IMR-90 (cell line): ENCODE measurements at regions of chr15 and their contacts with region 1.

Region 1: GRCh38 chr15:23648920-23649515 is 1.4 kb upstream of the MAGEL2 start:
- DNase-seq: no peak
- ATAC-seq: peak; percentile 42; the same call in 1 of the 2 replicates
- H3K4me3 ChIP-seq: no peak overlapping the region
- H3K27ac ChIP-seq: no peak overlapping the region
- H3K4me1 ChIP-seq: no peaks in the 10 kb centered on the region
- H3K27me3 ChIP-seq: no peaks in the 10 kb centered on the region
- CTCF ChIP-seq: peak; percentile 42
- POLR2A ChIP-seq: no peak
- RAD21 ChIP-seq: peak; percentile 21; the same call in 1 of the 2 replicates

Region 2: GRCh38 chr15:23397779-23398178 is 251.2 kb before region 1 on chr15:
- CTCF ChIA-PET with region 1: no interaction called
- POLR2A ChIA-PET with region 1: no interaction called
- dilution Hi-C with region 1: no loop called
- in situ Hi-C with region 1: no loop called
- intact Hi-C with region 1: no loop called
- DNase-seq: no peak
- ATAC-seq: no peak
- H3K4me3 ChIP-seq: no peak overlapping the region
- H3K27ac ChIP-seq: no peak overlapping the region
- H3K4me1 ChIP-seq: no peaks in the 10 kb centered on the region
- H3K27me3 ChIP-seq: no peaks in the 10 kb centered on the region
- CTCF ChIP-seq: no peak
- POLR2A ChIP-seq: no peak
- RAD21 ChIP-seq: no peak

Region 3: GRCh38 chr15:23497710-23498111 is 151.3 kb before region 1 on chr15:
- CTCF ChIA-PET with region 1: no interaction called
- POLR2A ChIA-PET with region 1: no interaction called
- dilution Hi-C with region 1: no loop called
- in situ Hi-C with region 1: no loop called
- intact Hi-C with region 1: no loop called
- DNase-seq: no peak
- ATAC-seq: no peak
- H3K4me3 ChIP-seq: no peak overlapping the region
- H3K27ac ChIP-seq: no peak overlapping the region
- H3K4me1 ChIP-seq: no peaks in the 10 kb centered on the region
- H3K27me3 ChIP-seq: no peaks in the 10 kb centered on the region
- CTCF ChIP-seq: no peak
- POLR2A ChIP-seq: no peak
- RAD21 ChIP-seq: no peak

Region 4: DNA sequence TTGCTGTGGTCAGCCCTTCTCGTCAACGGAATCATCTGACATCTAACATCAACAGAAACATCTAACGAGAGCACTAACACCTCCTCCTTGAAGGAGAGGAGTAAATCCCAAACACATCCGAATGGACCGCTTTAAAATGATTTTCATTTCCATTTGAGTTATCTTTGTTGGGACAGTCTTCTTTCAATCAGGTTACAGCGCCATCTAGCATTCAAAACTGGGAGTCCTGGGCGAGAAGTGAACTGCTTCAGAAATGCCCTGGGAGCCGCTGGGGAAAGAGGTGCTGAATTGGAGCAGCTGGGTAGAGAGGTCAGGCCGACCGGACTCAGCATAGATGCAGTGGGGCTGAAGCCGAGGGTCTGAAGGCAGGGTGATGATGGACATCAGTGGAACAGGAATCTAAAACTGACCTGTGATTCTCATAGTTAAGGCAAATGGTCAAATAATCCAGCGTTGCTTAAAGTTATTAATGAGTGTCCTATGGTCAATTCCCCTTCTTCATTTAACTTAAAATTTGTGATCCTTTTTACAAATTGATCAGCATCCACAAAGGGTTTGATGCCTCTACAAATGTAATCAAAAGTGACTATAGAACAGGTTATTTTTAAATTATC is 208.1 kb after region 1 on chr15:
- CTCF ChIA-PET with region 1: no interaction called
- POLR2A ChIA-PET with region 1: no interaction called
- dilution Hi-C with region 1: no loop called
- in situ Hi-C with region 1: loop called (anchors 10 kb)
- intact Hi-C with region 1: loop called (anchors 1 kb)
- DNase-seq: peak; percentile 22
- ATAC-seq: 0 out of 2 replicates have a peak, but pooled peaks have one; percentile 29
- H3K4me3 ChIP-seq: no peak overlapping the region
- H3K27ac ChIP-seq: no peak overlapping the region
- H3K4me1 ChIP-seq: no peaks in the 10 kb centered on the region
- H3K27me3 ChIP-seq: no peaks in the 10 kb centered on the region
- CTCF ChIP-seq: peak; percentile 53
- POLR2A ChIP-seq: no peak
- RAD21 ChIP-seq: peak; percentile 37